ENCODE measurements at regions of chr2 and their contacts with region 1.

Region 1: DNA sequence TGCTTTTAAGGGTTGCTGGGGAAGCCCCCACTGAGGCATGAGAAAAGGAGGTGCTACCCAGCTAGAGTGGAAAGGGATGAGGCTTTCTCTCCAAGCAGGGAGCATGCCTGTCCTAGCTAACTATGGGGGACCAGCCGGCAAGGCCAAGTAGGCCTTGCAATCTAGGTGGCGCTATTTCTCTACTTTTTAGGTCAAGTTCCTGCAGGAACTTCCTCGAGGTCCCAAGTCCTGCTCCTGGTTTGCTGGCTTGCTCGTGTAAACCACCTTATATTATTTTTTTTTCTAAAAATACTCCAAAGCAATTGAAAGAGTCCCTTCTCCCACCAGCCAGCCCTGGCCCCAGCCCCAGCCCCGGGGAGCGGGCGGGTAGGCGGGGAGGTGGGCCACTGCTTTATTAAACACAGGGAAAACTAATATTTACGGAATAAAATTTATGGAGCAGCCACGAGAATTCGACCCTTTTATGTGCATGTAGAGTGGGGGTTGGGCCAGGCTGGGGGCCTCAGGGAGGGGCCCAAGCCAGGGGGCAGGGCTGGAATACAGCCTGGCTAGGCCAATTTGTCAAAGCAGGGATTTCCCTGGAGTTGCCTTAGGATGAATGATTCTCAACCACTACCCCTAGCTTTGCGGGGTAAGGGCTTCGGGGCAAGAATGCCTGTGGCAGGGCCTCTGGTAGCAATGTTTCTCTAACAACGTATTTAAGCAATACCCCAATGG is 12.8 kb upstream of the IHH start:
- DNase-seq: peak; percentile 67
- CTCF ChIP-seq: peak; percentile 55

Region 2: GRCh38 chr2:219087361-219087760 is 13.8 kb after region 1 on chr2:
- CTCF ChIA-PET with region 1: interaction called, 31 read pairs
- POLR2A ChIA-PET with region 1: no interaction called
- DNase-seq: no peak
- CTCF ChIP-seq: no peak

Region 3: DNA sequence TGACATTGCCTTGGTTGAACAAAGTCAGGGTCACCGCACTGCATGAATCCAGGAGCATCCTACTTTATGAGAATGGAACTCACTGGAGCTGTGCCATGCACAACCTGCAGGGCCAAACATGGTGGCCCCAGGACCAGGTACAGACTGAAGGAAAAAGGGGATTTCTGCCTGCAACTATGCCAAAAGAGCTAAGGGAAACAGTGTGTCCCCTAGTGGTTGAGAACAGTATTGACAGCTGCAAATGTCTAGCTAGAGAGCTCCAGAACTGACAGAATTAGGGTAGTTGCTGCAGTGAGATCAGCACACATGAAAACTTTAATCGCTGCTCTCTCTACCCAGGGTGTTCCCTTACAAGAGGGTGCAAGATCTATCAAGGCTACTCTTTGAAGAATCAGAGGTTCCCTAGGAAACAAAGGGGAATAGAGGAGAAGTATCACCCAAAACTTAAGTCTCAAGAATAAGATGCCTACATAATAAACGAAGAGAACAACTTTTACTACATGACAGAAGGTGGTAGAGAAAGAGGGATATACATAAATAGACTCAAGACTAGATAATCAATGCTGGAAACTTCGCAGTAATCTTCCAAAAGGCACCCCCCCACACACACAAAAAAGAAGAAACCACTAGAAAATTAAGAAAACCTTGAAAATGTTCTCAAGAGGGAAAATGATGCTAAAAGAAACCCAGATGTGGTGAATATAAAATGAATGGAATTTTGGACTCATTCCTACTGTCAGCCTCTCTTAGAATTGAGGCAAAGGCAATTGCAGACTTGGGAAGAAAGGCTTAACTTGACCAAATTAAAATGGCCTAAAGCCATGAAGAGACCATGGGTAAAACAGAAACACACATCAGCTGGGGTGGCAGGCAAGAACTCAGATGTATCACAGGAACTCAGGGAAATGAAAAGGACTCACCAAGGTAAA is 30.8 kb after region 1 on chr2:
- CTCF ChIA-PET with region 1: interaction called, 208 read pairs
- POLR2A ChIA-PET with region 1: no interaction called
- DNase-seq: peak; percentile 69
- CTCF ChIP-seq: peak; percentile 31

Region 4: GRCh38 chr2:219177552-219178376 is 104.2 kb after region 1 on chr2 and contains the start of gene RETREG2:
- CTCF ChIA-PET with region 1: no interaction called
- POLR2A ChIA-PET with region 1: no interaction called
- DNase-seq: peak; percentile 98
- CTCF ChIP-seq: peak; percentile 71

Measured in GM10248 (cell line).